ENCODE measurements at regions of chr11 and their contacts with region 1.

Region 1: DNA sequence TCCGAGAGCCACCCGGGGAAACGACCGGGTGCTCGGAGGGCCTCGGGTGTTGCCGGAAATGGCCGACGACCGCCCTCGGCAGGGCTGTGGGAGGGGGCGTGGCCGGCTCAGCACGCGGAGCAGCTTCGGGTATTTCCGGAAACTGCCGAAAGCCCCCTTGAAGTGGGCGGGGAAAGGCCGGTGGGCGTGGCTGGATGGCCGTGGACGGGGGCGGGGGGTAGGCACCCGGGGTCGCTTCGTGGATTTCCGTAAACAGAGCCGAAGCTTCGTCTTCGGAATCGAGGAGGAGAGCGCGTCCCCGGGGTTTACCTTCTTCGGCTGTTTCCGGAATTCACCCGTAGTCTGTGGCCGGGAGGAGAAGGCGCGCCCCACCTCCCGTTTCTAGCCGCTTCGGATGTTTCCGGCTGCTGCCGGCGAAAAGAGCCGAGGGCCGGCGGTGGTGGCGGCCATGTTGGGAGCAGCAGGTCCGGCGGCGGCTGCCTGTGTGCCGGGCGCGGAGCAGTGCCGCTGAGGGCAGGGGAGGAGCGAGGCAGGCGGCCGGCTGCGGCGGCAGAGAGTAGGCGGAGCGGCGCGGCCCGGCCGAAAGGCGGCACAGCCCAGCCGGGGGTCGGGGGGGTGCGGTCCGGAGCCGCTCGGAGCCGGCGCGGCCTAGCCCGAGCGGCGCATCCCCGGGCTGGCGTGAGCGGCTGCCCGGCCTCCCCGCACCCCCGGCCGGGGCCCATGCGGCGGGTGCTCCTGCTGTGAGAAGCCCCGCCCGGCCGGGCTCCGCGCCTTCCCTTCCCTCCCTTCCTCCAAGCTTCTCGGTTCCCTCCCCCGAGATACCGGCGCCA is at the start of gene MARK2:
- DNase-seq: peak; percentile 98 to 100 (median 100)
- ATAC-seq: peak; percentile 83
- H3K4me3 ChIP-seq: peak within 1 kb of the TSS; percentile 76 to 93
- H3K4me3 Mint-ChIP-seq: peak within 1 kb of the TSS; percentile 91
- H3K27ac ChIP-seq: peak within 1 kb of the TSS; percentile 75 to 77
- H3K27ac Mint-ChIP-seq: peak within 1 kb of the TSS; percentile 86
- H3K4me1 ChIP-seq: peaks cover 40% of the 10 kb centered on the region
- H3K4me1 Mint-ChIP-seq: peaks cover 55% of the 10 kb centered on the region
- H3K27me3 ChIP-seq: no peaks in the 10 kb centered on the region
- H3K27me3 Mint-ChIP-seq: no peaks in the 10 kb centered on the region
- CTCF ChIP-seq: no peak
- total RNA-seq, gene MARK2: 16.9 to 19.1 TPM

Region 2: DNA sequence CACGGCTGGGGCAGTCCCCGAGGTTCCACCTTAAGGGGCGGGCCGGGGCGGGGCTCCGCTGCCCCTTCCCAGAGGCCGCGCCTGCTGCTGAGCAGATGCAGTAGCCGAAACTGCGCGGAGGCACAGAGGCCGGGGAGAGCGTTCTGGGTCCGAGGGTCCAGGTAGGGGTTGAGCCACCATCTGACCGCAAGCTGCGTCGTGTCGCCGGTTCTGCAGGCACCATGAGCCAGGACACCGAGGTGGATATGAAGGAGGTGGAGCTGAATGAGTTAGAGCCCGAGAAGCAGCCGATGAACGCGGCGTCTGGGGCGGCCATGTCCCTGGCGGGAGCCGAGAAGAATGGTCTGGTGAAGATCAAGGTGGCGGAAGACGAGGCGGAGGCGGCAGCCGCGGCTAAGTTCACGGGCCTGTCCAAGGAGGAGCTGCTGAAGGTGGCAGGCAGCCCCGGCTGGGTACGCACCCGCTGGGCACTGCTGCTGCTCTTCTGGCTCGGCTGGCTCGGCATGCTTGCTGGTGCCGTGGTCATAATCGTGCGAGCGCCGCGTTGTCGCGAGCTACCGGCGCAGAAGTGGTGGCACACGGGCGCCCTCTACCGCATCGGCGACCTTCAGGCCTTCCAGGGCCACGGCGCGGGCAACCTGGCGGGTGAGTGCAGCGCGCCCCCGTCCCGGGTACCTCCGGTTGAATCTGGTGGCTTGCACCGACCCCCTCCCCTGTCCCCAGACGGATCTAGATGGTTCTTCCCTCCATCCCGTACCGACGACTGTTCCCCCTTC is 957.9 kb before region 1 on chr11 and contains the start of gene SLC3A2:
- CTCF ChIA-PET with region 1: no interaction called
- POLR2A ChIA-PET with region 1: no interaction called
- intact Hi-C with region 1: loop called in 1 of 2 experiments (anchors 2 kb)
- DNase-seq: peak; percentile 76 to 94 (median 85)
- ATAC-seq: peak; percentile 74
- H3K4me3 ChIP-seq: peak within 1 kb of the TSS; percentile 66 to 97
- H3K4me3 Mint-ChIP-seq: peak within 1 kb of the TSS; percentile 100
- H3K27ac ChIP-seq: peak within 1 kb of the TSS; percentile 94 to 99
- H3K27ac Mint-ChIP-seq: peak within 1 kb of the TSS; percentile 100
- H3K4me1 ChIP-seq: peaks cover 36% of the 10 kb centered on the region
- H3K4me1 Mint-ChIP-seq: peaks cover 50% of the 10 kb centered on the region
- H3K27me3 ChIP-seq: no peaks in the 10 kb centered on the region
- H3K27me3 Mint-ChIP-seq: no peaks in the 10 kb centered on the region
- CTCF ChIP-seq: peak; percentile 84
- total RNA-seq, gene SLC3A2: 212 to 245 TPM

Region 3: DNA sequence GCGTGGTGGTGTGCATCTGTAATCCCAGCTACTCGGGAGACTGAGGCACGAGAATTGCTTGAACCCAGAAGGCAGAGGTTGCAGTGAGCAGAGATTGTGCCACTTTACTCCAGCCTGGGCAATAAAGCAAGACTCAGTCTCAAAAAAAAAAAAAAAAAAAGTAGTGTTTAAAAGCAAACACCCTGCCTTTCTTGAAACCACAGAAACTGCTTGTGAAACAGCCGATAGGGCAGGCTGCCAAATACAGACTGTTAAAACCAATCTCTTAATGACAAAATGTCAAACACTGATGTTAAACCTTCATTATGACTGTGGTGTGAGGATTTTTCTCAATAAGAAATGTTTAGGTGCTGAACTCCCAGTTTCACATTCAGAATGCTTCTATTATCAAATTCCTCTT is 27.3 kb after region 1 on chr11:
- CTCF ChIA-PET with region 1: interaction called, 92 read pairs
- POLR2A ChIA-PET with region 1: interaction called, 6 read pairs
- intact Hi-C with region 1: loop called (anchors 1 to 2 kb)
- DNase-seq: peak; percentile 42 to 92 (median 77)
- ATAC-seq: peak; percentile 70
- H3K4me3 ChIP-seq: no peak overlapping the region
- H3K4me3 Mint-ChIP-seq: peak overlapping the region; percentile 58
- H3K27ac ChIP-seq: peak overlapping the region in 1 of 2 experiments; percentile 49
- H3K27ac Mint-ChIP-seq: peak overlapping the region; percentile 79
- H3K4me1 ChIP-seq: peaks cover 74% of the 10 kb centered on the region
- H3K4me1 Mint-ChIP-seq: peaks cover 80% of the 10 kb centered on the region
- H3K27me3 ChIP-seq: no peaks in the 10 kb centered on the region
- H3K27me3 Mint-ChIP-seq: no peaks in the 10 kb centered on the region
- CTCF ChIP-seq: no peak

Region 4: DNA sequence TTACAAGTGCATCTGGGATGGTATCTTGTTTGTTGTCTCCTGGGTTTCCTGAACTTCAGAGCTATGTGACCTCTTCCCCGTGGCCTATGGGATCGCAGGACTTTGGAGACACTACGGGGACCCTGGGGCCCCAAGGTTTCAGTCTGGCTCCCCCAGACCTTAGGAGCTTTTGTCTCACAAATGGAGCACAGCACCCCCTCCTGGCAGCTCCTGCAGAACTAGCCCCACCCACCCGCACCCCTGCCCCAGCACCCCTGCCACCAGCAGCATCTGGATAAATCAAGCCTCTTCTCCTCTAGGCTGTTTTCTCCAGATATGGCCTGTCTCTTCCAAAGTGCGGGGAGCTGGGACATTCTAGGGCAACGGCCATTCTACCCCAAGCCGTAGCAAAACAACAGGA is 67.7 kb after region 1 on chr11:
- CTCF ChIA-PET with region 1: interaction called, 80 read pairs
- POLR2A ChIA-PET with region 1: interaction called, 13 read pairs
- intact Hi-C with region 1: loop called (anchors 1 kb)
- DNase-seq: peak; percentile 28 to 74 (median 68)
- ATAC-seq: peak; percentile 77
- H3K4me3 ChIP-seq: no peak overlapping the region
- H3K4me3 Mint-ChIP-seq: no peak overlapping the region
- H3K27ac ChIP-seq: no peak overlapping the region
- H3K27ac Mint-ChIP-seq: no peak overlapping the region
- H3K4me1 ChIP-seq: no peaks in the 10 kb centered on the region
- H3K4me1 Mint-ChIP-seq: peaks cover 3% of the 10 kb centered on the region
- H3K27me3 ChIP-seq: no peaks in the 10 kb centered on the region
- H3K27me3 Mint-ChIP-seq: no peaks in the 10 kb centered on the region
- CTCF ChIP-seq: peak; percentile 38

Region 5: DNA sequence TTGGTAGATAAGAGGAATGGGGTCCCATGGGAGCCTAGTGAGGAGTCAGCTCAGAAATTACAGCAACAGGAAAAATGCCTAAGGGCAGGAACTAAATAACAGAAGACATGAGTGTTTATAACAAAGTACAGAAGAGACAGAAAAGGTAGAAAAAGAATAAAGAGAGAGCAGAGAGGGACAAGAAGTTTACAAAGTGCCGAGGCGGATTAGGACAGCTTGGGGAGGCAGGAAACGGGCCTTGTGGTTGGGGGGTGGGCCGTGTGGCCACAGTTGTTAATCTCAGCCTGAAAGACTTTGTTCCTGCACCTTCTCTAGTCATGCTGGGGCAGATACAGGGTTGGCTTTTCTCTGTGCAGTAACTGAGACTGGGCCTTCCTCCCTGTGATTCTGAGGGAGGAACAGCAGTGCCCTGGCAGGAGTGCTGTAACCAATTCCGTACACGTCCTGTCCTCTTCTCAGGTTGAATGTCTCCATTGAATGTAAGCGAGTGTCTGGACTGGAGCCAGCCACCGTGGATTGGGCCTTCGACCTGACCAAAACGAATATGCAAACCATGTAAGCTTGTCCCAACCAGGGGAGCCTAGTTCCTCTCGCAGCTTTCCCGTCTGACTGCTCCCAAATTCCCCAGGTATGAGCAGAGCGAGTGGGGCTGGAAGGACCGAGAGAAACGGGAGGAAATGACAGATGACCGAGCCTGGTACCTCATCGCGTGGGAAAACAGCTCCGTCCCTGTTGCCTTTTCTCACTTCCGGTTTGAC is 113.1 kb after region 1 on chr11:
- CTCF ChIA-PET with region 1: interaction called, 337 read pairs
- POLR2A ChIA-PET with region 1: interaction called, 4 read pairs
- intact Hi-C with region 1: no loop called
- DNase-seq: peak in 7 of 9 experiments; percentile 18 to 70 (median 47)
- ATAC-seq: peak; percentile 68
- H3K4me3 ChIP-seq: peak overlapping the region in 1 of 2 experiments; percentile 24
- H3K4me3 Mint-ChIP-seq: peak overlapping the region; percentile 13
- H3K27ac ChIP-seq: peak overlapping the region; percentile 0 to 66
- H3K27ac Mint-ChIP-seq: peak overlapping the region; percentile 70
- H3K4me1 ChIP-seq: peaks cover 36% of the 10 kb centered on the region
- H3K4me1 Mint-ChIP-seq: peaks cover 33% of the 10 kb centered on the region
- H3K27me3 ChIP-seq: no peaks in the 10 kb centered on the region
- H3K27me3 Mint-ChIP-seq: no peaks in the 10 kb centered on the region
- CTCF ChIP-seq: no peak

Region 6: GRCh38 chr11:64152841-64153691 is 314.2 kb after region 1 on chr11:
- CTCF ChIA-PET with region 1: interaction called, 92 read pairs
- POLR2A ChIA-PET with region 1: no interaction called
- intact Hi-C with region 1: loop called (anchors 1 kb)
- DNase-seq: peak; percentile 50 to 84 (median 71)
- ATAC-seq: peak; percentile 98
- H3K4me3 ChIP-seq: no peak overlapping the region
- H3K4me3 Mint-ChIP-seq: no peak overlapping the region
- H3K27ac ChIP-seq: no peak overlapping the region
- H3K27ac Mint-ChIP-seq: no peak overlapping the region
- H3K4me1 ChIP-seq: no peaks in the 10 kb centered on the region
- H3K4me1 Mint-ChIP-seq: peaks cover 4% of the 10 kb centered on the region
- H3K27me3 ChIP-seq: no peaks in the 10 kb centered on the region
- H3K27me3 Mint-ChIP-seq: peaks cover 2% of the 10 kb centered on the region
- CTCF ChIP-seq: peak; percentile 99

Measured in CD8-positive, alpha-beta T cell (primary cell).